Activated naive CD4-positive, alpha-beta T cell treated with anti-CD3 and anti-CD28 coated beads for 36 hours (primary cell): ENCODE measurements at regions of chr1 and their contacts with region 1.

Region 1: GRCh38 chr1:175481126-175482066 is 262.0 kb downstream of the TNR start:
- DNase-seq: no peak
- H3K4me3 Mint-ChIP-seq: no peak overlapping the region
- H3K27ac Mint-ChIP-seq: no peak overlapping the region
- H3K4me1 Mint-ChIP-seq: no peaks in the 10 kb centered on the region
- H3K27me3 Mint-ChIP-seq: peaks cover 19% of the 10 kb centered on the region

Region 2: DNA sequence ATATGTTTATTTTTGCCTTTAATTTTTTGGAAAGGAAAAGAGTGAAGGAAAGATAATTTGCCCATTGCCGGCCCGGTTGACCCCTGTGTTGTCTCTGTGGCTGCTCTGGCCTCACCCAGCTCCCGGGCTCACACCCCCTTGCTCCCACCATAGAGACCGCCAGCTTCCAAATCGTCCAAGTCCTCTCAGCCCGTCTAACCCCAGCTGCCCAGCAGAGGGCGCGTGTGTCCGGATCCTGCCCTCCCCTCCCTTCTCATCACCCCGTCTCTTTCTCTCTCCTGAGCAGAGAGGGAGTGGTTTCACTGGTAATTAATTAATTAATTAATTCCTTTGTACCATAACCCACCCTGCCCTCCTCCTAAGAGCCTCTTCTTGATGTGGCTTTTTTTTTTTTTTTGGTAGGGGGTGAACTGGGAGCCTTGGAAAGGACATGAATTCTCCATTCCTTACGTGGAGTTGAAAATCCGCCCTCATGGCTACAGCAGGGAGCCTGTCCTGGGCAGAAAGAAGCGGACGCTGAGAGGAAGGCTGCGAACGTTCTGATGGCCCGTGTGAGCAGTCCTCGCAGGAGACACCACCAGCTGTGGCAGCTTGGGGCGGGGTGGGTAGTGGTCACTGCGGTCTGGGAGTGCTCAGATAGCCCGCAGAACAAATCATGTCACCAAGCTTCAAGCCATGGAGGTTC is 334.7 kb before region 1 on chr1:
- CTCF ChIA-PET with region 1: interaction called, 3 read pairs
- intact Hi-C with region 1: loop called (anchors 2 kb)
- DNase-seq: peak; percentile 80
- H3K4me3 Mint-ChIP-seq: no peak overlapping the region
- H3K27ac Mint-ChIP-seq: no peak overlapping the region
- H3K4me1 Mint-ChIP-seq: peaks cover 2% of the 10 kb centered on the region
- H3K27me3 Mint-ChIP-seq: peaks cover 13% of the 10 kb centered on the region

Region 3: GRCh38 chr1:175449306-175449705 is 32.1 kb before region 1 on chr1:
- CTCF ChIA-PET with region 1: no interaction called
- intact Hi-C with region 1: no loop called
- DNase-seq: no peak
- H3K4me3 Mint-ChIP-seq: no peak overlapping the region
- H3K27ac Mint-ChIP-seq: no peak overlapping the region
- H3K4me1 Mint-ChIP-seq: no peaks in the 10 kb centered on the region
- H3K27me3 Mint-ChIP-seq: no peaks in the 10 kb centered on the region

Region 4: DNA sequence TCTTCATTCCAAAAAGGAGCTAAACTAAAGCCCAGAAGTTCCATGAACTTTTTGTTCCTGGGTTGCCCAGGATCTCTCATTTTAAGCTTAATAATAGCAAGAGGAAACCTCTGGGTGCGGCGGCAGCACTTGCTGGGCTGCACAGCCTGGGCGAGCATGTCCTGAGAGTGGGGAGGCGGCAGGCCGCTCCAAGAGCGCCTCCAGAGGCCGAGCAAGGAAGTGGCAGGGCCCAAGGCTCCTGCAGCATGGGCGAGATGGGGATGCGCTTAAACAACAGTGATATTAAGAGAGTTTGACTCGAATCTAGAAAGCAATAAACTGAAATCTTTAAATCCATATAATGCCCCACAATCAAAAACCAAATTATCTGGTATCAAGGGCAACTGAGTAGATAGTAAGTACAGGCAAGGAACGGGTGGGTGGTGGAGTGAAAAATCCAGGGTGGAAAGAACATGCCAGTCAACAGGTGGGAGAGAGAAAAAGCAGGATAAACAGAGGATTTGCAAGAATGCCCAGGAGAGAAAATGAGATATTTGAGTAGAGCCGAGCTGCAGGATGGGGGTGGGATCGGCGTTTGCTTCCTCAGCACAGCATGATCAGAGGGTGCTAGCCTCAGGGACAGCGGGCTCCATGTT is 276.1 kb after region 1 on chr1:
- CTCF ChIA-PET with region 1: no interaction called
- intact Hi-C with region 1: loop called (anchors 10 kb)
- DNase-seq: peak; percentile 36
- H3K4me3 Mint-ChIP-seq: no peak overlapping the region
- H3K27ac Mint-ChIP-seq: no peak overlapping the region
- H3K4me1 Mint-ChIP-seq: no peaks in the 10 kb centered on the region
- H3K27me3 Mint-ChIP-seq: peaks cover 7% of the 10 kb centered on the region

Region 5: DNA sequence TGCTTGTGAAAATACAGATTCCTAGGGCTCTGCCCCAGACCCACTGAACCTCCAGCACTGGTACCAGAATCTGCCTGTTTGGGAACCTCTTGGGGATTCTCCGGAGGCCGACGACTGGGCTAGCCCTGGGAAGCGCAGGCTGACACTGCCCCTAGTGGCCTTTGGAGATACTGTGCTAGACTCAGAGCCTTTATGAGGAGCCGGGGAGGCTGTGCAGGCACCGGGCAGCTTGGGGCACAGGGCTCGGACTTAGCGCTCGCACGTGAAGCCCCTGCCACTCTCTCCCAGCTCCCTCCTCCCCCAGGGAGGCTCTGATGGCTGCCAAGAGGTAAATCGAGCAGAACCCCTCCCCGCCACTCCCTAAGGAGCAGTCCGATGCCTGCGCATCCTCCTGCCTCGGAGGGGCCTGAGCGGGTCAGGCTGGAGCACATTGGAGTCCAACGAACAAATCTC is 406.6 kb after region 1 on chr1:
- CTCF ChIA-PET with region 1: no interaction called
- intact Hi-C with region 1: loop called (anchors 5 kb)
- DNase-seq: peak; percentile 42
- H3K4me3 Mint-ChIP-seq: no peak overlapping the region
- H3K27ac Mint-ChIP-seq: no peak overlapping the region
- H3K4me1 Mint-ChIP-seq: no peaks in the 10 kb centered on the region
- H3K27me3 Mint-ChIP-seq: no peaks in the 10 kb centered on the region

Region 6: GRCh38 chr1:176220100-176220689 is 738.8 kb after region 1 on chr1:
- CTCF ChIA-PET with region 1: no interaction called
- intact Hi-C with region 1: no loop called
- DNase-seq: no peak
- H3K4me3 Mint-ChIP-seq: no peak overlapping the region
- H3K27ac Mint-ChIP-seq: no peak overlapping the region
- H3K4me1 Mint-ChIP-seq: no peaks in the 10 kb centered on the region
- H3K27me3 Mint-ChIP-seq: peaks cover 14% of the 10 kb centered on the region

Region 7: GRCh38 chr1:176466514-176467220 is 985.3 kb after region 1 on chr1:
- CTCF ChIA-PET with region 1: no interaction called
- intact Hi-C with region 1: loop called (anchors 10 kb)
- DNase-seq: no peak
- H3K4me3 Mint-ChIP-seq: no peak overlapping the region
- H3K27ac Mint-ChIP-seq: no peak overlapping the region
- H3K4me1 Mint-ChIP-seq: no peaks in the 10 kb centered on the region
- H3K27me3 Mint-ChIP-seq: no peaks in the 10 kb centered on the region